Dendritic cell treated with granulocyte-macrophage colony-stimulating factor and Interleukin-4, amounts not matched to agents 40 ng/mL and 50 ng/mL, for 4 days (primary cell): ENCODE measurements at regions of chr6 and their contacts with region 1.

Region 1: DNA sequence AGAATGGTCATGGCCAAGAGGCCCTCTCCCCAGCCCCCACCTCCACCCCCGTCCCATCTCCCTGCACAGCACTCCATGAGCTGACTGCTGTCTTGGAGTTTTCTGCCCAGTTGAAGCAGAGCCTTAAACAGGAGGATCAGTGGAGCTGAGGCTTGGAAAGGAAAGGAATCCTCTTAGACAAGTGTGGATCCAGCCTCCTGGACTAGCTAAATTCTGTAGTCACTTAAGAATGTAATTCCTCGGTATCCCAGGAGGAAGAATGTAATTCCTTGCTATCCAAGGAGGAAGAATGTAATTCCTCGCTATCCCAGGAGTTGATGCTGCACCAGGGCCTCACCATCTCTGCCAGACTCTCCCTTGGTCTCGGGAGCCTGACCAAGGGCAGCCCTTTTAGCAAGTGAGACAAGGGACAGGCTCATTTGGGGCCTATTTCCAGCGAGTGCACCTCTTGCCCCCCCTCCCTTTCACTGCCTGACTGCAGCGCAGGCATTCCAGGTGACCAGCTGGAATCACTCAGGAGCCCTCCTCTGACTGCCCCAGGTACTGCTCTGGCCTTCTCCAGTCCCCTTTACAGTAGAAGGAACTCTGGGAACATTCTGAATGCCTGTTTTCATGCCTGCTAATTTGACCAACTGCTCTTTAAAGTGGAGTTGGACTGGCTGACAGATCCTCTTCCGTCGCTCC is 76.2 kb downstream of the TCP11 start:
- H3K4me3 Mint-ChIP-seq: no peak overlapping the region
- H3K27ac Mint-ChIP-seq: no peak overlapping the region
- H3K4me1 Mint-ChIP-seq: no peaks in the 10 kb centered on the region
- H3K27me3 Mint-ChIP-seq: no peaks in the 10 kb centered on the region

Region 2: GRCh38 chr6:34273242-34273805 is 791.6 kb before region 1 on chr6:
- intact Hi-C with region 1: no loop called
- H3K4me3 Mint-ChIP-seq: peak overlapping the region; percentile 27
- H3K27ac Mint-ChIP-seq: peak overlapping the region; percentile 90
- H3K4me1 Mint-ChIP-seq: peaks cover 42% of the 10 kb centered on the region
- H3K27me3 Mint-ChIP-seq: no peaks in the 10 kb centered on the region

Region 3: DNA sequence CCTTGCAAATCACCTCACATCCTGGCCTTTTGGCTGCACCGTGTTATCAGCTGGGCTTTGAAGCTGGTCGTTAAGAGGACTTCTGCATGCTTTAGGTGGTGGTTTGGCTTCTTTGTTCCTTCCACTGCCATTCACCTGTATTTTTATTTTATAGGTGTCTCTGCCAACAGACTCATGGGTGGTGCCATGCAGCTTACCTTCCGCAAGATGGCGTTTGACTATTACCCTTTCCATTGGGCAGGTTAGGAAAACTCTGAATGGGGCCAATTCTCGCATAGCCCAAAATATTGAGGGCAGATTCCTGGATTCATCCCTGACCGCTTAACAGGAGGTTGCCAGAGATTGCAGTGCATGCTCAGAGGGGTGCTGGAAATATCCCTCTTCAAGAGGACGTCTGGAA is 209.4 kb before region 1 on chr6:
- intact Hi-C with region 1: no loop called
- H3K4me3 Mint-ChIP-seq: no peak overlapping the region
- H3K27ac Mint-ChIP-seq: no peak overlapping the region
- H3K4me1 Mint-ChIP-seq: no peaks in the 10 kb centered on the region
- H3K27me3 Mint-ChIP-seq: no peaks in the 10 kb centered on the region

Region 4: GRCh38 chr6:35024551-35025054 is 40.3 kb before region 1 on chr6:
- intact Hi-C with region 1: loop called (anchors 5 kb)
- H3K4me3 Mint-ChIP-seq: no peak overlapping the region
- H3K27ac Mint-ChIP-seq: peak overlapping the region; percentile 47
- H3K4me1 Mint-ChIP-seq: peaks cover 30% of the 10 kb centered on the region
- H3K27me3 Mint-ChIP-seq: no peaks in the 10 kb centered on the region